ENCODE measurements at regions of chr20 and their contacts with region 1.

Region 1: GRCh38 chr20:51385646-51386530 is 156.6 kb downstream of the NFATC2 start:
- DNase-seq: peak in 16 of 35 experiments; percentile 11 to 65 (median 21)
- ATAC-seq: peak in 2 of 4 experiments; percentile 49 to 56
- H3K4me3 ChIP-seq: no peak overlapping the region
- H3K4me3 Mint-ChIP-seq: no peak overlapping the region
- H3K27ac ChIP-seq: peak overlapping the region; percentile 28
- H3K27ac Mint-ChIP-seq: peak overlapping the region; percentile 87
- H3K4me1 ChIP-seq: peaks cover 0 to 47% of the 10 kb centered on the region in 2 experiments
- H3K4me1 Mint-ChIP-seq: peaks cover 4 to 71% (median 54%) of the 10 kb centered on the region in 3 donors
- H3K27me3 ChIP-seq: no peaks in the 10 kb centered on the region
- H3K27me3 Mint-ChIP-seq: no peaks in the 10 kb centered on the region

Region 2: DNA sequence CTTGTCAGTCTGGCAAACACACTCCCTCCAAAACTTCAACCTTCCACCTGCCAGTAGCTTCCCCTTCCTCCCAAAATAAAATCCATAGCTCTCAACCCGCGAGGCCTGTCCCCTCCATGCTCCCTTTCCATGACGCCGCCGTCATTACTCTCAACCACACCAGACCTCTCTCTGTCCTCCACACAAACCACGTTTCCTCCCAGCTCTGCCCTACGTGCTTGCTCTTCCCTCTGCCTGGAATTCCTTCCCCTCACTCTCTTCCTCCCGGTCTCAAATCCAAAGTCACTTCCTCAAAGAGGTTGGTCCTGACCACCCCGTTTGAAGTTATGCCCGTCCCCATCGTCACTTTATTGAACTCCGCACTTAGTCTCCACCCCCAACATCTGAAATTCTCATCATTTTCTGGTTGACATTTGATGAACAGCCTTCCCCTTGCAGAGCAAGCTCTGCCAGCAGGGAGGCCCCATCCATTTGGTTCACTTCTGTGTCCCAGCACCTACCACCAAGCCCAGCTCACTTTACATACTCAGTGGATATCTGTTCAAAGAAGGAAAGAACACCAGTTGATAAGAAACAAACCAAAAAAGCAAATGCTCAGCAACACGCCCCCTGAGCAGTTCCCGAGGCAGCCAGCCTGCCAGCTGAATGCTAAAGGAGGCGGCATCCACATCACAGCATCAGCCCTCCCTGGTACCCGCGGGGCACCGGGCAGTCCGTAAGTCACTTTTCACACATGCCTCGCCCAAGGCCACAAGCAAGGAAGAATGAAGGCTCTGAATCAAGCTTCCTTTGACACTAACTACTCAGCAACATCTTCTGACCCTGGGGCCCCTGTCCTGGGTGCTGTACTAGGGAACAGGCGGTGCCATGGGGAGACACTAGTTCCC is 31.6 kb after region 1 on chr20:
- CTCF ChIA-PET with region 1: interaction called in 1 of 2 experiments, 10 read pairs
- POLR2A ChIA-PET with region 1: no interaction called
- DNase-seq: peak in 24 of 35 experiments; percentile 14 to 67 (median 34)
- ATAC-seq: peak in 3 of 4 experiments; percentile 18 to 57 (median 47)
- H3K4me3 ChIP-seq: no peak overlapping the region
- H3K4me3 Mint-ChIP-seq: peak overlapping the region; percentile 2 to 42 (median 39)
- H3K27ac ChIP-seq: peak overlapping the region; percentile 81
- H3K27ac Mint-ChIP-seq: peak overlapping the region; percentile 84 to 97
- H3K4me1 ChIP-seq: peaks cover 0 to 62% of the 10 kb centered on the region in 2 experiments
- H3K4me1 Mint-ChIP-seq: peaks cover 45 to 88% (median 69%) of the 10 kb centered on the region in 3 donors
- H3K27me3 ChIP-seq: no peaks in the 10 kb centered on the region
- H3K27me3 Mint-ChIP-seq: no peaks in the 10 kb centered on the region

Region 3: DNA sequence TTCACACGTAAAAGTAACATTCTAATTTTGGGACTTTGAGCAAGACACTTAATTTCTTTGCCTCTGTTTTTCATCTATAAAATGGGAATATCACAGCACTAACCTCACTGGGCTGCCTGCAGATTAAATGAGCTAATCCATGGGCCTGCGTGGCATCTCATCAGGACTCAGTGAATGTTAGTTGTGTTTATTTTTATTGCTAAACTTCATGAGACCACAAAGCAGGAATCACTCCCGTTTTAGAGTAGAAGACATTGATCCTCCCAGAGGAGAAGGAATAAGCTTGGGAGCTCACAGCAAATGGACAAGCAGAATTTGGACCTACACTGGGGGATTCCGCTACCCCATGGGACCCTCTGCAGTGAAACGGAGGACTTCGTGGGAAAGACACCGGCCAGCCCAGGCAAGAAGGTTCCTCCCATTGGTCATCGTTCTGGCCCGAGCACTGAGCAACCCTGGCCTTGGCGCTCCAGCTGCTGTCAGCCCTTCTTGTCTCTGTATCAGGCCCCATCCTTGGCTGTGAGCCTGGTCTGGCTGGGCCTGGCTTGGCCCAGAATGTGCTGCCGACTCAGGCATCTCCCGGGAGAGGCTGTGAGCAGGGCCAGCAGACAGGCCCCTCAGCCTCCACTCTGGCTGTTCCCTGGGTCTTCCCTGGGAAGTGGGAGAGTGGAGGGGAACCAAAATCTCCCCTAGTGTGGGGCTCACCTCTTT is 76.8 kb after region 1 on chr20:
- CTCF ChIA-PET with region 1: no interaction called
- POLR2A ChIA-PET with region 1: interaction called in 1 of 2 experiments, 12 read pairs
- DNase-seq: no peak
- ATAC-seq: no peak
- H3K4me3 ChIP-seq: no peak overlapping the region
- H3K4me3 Mint-ChIP-seq: no peak overlapping the region
- H3K27ac ChIP-seq: no peak overlapping the region
- H3K27ac Mint-ChIP-seq: no peak overlapping the region
- H3K4me1 ChIP-seq: peaks cover 0 to 19% of the 10 kb centered on the region in 2 experiments
- H3K4me1 Mint-ChIP-seq: peaks cover 4 to 38% (median 11%) of the 10 kb centered on the region in 3 donors
- H3K27me3 ChIP-seq: no peaks in the 10 kb centered on the region
- H3K27me3 Mint-ChIP-seq: no peaks in the 10 kb centered on the region

Region 4: GRCh38 chr20:51541189-51542032 is 155.5 kb after region 1 on chr20:
- CTCF ChIA-PET with region 1: interaction called in 1 of 2 experiments, 6 read pairs
- POLR2A ChIA-PET with region 1: interaction called in 1 of 2 experiments, 11 read pairs
- DNase-seq: peak; percentile 57 to 93 (median 83)
- ATAC-seq: peak; percentile 73 to 83 (median 74)
- H3K4me3 ChIP-seq: peak overlapping the region; percentile 90 to 96
- H3K4me3 Mint-ChIP-seq: peak overlapping the region; percentile 98 to 99 (median 99)
- H3K27ac ChIP-seq: peak overlapping the region; percentile 97
- H3K27ac Mint-ChIP-seq: peak overlapping the region; percentile 94
- H3K4me1 ChIP-seq: peaks cover 12 to 61% of the 10 kb centered on the region in 2 experiments
- H3K4me1 Mint-ChIP-seq: peaks cover 54 to 57% (median 54%) of the 10 kb centered on the region in 3 donors
- H3K27me3 ChIP-seq: no peaks in the 10 kb centered on the region
- H3K27me3 Mint-ChIP-seq: no peaks in the 10 kb centered on the region

Region 5: GRCh38 chr20:51595058-51595532 is 209.2 kb after region 1 on chr20:
- CTCF ChIA-PET with region 1: interaction called, 3 to 14 read pairs
- POLR2A ChIA-PET with region 1: no interaction called
- DNase-seq: peak; percentile 46 to 84 (median 67)
- ATAC-seq: peak; percentile 90 to 99 (median 96)
- H3K4me3 ChIP-seq: no peak overlapping the region
- H3K4me3 Mint-ChIP-seq: peak overlapping the region; percentile 17 to 34 (median 32)
- H3K27ac ChIP-seq: no peak overlapping the region
- H3K27ac Mint-ChIP-seq: peak overlapping the region; percentile 75 to 83
- H3K4me1 ChIP-seq: peaks cover 0 to 8% of the 10 kb centered on the region in 2 experiments
- H3K4me1 Mint-ChIP-seq: peaks cover 8 to 16% (median 12%) of the 10 kb centered on the region in 3 donors
- H3K27me3 ChIP-seq: peaks cover 0 to 3% of the 10 kb centered on the region in 2 experiments
- H3K27me3 Mint-ChIP-seq: peaks cover 0 to 3% of the 10 kb centered on the region in 2 donors